ENCODE measurements at regions of chr14 and their contacts with region 1.

Region 1: GRCh38 chr14:99320105-99320572 is 48.1 kb upstream of the BCL11B start:
- DNase-seq: peak; percentile 79
- ATAC-seq: peak; percentile 88
- H3K4me3 Mint-ChIP-seq: no peak overlapping the region
- H3K27ac Mint-ChIP-seq: no peak overlapping the region
- H3K4me1 Mint-ChIP-seq: peaks cover 2% of the 10 kb centered on the region
- H3K27me3 Mint-ChIP-seq: no peaks in the 10 kb centered on the region

Region 2: DNA sequence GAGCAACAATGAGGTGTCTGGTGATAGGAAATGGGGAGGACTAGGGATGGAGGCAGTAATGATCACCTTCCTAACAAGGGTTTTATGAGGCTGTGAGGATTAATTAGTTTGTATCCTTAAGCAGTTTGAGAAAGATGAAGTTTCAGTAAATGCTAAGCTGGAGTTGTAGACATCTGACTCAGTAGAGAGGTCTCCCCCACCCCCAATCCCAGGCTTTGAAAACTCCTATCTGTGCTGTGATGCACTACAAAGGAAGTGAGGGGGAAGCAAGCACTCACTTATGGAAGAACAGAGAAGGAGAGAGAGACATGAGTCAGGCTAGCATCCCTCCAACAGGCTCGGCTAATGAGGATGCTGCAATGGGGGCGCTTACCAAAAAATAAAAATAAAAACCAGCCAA is 42.6 kb before region 1 on chr14:
- CTCF ChIA-PET with region 1: interaction called, 16 read pairs
- POLR2A ChIA-PET with region 1: no interaction called
- DNase-seq: no peak
- ATAC-seq: no peak
- H3K4me3 Mint-ChIP-seq: no peak overlapping the region
- H3K27ac Mint-ChIP-seq: no peak overlapping the region
- H3K4me1 Mint-ChIP-seq: peaks cover 49% of the 10 kb centered on the region
- H3K27me3 Mint-ChIP-seq: peaks cover 28% of the 10 kb centered on the region

Region 3: GRCh38 chr14:99304209-99304608 is 15.9 kb before region 1 on chr14:
- CTCF ChIA-PET with region 1: interaction called, 13 read pairs
- POLR2A ChIA-PET with region 1: no interaction called
- DNase-seq: no peak
- ATAC-seq: no peak
- H3K4me3 Mint-ChIP-seq: no peak overlapping the region
- H3K27ac Mint-ChIP-seq: no peak overlapping the region
- H3K4me1 Mint-ChIP-seq: no peaks in the 10 kb centered on the region
- H3K27me3 Mint-ChIP-seq: peaks cover 17% of the 10 kb centered on the region

Region 4: GRCh38 chr14:99333841-99334635 is 13.9 kb after region 1 on chr14:
- CTCF ChIA-PET with region 1: interaction called, 12 read pairs
- POLR2A ChIA-PET with region 1: no interaction called
- DNase-seq: no peak
- ATAC-seq: no peak
- H3K4me3 Mint-ChIP-seq: no peak overlapping the region
- H3K27ac Mint-ChIP-seq: no peak overlapping the region
- H3K4me1 Mint-ChIP-seq: no peaks in the 10 kb centered on the region
- H3K27me3 Mint-ChIP-seq: peaks cover 7% of the 10 kb centered on the region

Region 5: DNA sequence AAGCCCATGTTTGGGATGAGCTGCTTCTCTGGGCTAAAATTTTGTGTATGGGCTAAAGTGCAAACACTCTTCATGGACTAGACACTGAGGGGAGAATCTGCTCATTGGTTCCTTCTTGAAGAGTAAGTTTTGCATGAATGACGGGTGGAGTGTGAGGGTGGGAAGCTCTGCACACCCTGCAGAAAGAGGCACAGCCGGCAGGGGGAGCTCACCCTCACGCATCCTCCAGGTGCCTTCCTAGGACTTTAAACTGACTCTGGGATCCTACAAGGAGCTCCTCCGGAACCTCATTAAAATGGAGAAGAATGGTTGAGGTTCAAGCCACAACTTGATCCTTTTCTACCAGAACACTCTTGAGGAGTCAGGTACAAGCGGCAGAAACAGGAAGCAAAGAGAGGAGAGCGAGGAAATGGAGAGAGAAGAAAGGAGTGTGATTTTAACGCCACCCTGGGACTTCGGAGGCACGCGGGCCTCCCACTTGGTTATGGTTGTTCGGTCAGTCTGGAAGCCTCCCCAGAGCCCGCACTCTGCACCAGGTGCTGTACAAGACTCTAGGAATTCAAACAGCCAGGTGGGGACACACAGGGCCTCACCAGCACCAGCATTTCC is 73.0 kb after region 1 on chr14:
- CTCF ChIA-PET with region 1: interaction called, 14 read pairs
- POLR2A ChIA-PET with region 1: no interaction called
- DNase-seq: peak; percentile 45
- ATAC-seq: peak; percentile 56
- H3K4me3 Mint-ChIP-seq: no peak overlapping the region
- H3K27ac Mint-ChIP-seq: no peak overlapping the region
- H3K4me1 Mint-ChIP-seq: peaks cover 11% of the 10 kb centered on the region
- H3K27me3 Mint-ChIP-seq: no peaks in the 10 kb centered on the region

Region 6: DNA sequence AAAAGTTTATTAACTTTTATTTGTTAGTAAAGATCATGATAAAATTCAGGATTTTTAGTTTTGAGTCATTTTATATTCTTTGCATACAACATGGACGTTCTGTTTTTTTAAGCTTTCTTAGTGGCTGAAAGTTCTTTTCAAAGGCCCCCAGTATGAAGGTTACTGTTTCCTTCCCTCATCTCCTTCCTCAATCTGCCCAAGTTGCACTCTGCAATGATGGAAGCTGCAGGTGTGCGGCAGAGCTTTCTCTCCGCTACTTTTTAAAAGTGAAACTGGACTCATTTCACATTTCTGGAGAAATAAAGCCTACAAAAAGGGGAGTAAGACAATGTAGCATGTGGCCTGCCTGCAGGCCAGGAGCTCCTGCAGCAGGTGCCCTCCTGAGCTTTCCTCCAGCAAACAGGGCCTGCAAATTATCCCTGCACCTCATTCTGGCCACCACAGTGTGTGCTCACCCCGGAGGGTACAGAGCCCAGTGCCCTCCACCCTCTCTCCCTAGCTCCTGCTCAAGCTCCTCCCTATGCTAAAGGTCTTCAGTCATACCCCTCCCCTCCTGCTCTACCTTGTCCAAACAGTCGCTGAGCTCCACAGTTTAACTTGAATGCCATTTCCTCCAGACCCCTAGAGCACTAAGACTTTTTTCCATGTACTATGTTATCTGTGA is 81.6 kb after region 1 on chr14:
- CTCF ChIA-PET with region 1: interaction called, 12 read pairs
- POLR2A ChIA-PET with region 1: no interaction called
- DNase-seq: no peak
- ATAC-seq: no peak
- H3K4me3 Mint-ChIP-seq: no peak overlapping the region
- H3K27ac Mint-ChIP-seq: peak overlapping the region; percentile 6
- H3K4me1 Mint-ChIP-seq: peaks cover 9% of the 10 kb centered on the region
- H3K27me3 Mint-ChIP-seq: no peaks in the 10 kb centered on the region

Region 7: DNA sequence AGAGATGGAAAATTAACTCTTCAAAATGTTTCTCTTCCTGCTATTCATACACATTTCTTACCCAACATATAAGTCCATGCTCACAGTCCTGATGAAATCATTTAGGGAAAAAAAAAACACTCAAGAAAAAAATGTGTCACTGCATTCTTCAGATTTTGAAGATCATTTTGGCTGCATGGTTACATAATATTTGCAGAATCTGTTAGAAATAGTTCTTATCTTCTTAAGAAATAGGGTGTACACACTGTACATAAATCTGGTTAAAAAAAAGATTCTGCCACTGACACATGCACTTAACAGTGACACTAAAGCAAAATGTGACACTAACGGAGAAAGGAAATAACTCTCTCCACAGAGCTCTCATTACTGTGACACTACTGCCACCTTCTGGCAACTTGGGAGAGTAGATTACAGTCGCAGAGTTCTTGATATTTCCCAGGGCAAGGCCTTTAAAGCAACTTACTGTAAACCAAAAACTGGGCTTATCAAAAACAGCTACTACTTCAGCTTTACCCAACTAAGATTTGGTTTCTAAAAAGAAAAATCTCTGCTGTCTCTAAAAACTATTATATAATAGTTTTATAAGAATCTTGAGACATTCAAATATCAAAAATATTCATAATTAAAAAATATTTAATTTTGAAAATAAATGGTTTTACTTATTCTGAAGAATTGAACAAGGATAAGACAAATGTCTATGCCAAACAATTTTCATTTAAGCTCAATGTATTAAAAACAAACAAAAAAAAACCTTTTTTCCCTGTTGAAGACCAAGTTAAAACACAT is 95.5 kb after region 1 on chr14:
- CTCF ChIA-PET with region 1: interaction called, 34 read pairs
- POLR2A ChIA-PET with region 1: no interaction called
- DNase-seq: peak; percentile 80
- ATAC-seq: peak; percentile 99
- H3K4me3 Mint-ChIP-seq: no peak overlapping the region
- H3K27ac Mint-ChIP-seq: no peak overlapping the region
- H3K4me1 Mint-ChIP-seq: peaks cover 18% of the 10 kb centered on the region
- H3K27me3 Mint-ChIP-seq: no peaks in the 10 kb centered on the region

Region 8: DNA sequence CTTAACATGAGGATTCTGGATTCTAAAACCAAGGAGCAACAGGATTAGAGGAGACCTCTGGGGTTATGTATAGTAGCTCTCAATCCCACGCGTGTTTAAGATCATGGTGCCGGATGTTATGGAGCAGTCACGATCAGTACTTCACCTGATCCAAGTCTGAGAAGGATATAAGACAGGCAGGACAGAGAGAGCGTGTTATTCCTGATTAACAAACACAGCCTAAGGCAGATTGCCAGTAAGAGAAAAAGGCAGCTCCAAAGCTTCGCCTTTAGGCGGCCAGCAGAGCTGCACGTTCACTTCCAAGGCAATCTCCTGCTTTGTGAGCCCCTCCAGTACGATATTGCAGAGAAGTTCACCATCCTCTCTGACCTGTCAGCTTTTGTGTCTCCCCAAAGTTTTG is 155.0 kb after region 1 on chr14:
- CTCF ChIA-PET with region 1: no interaction called
- POLR2A ChIA-PET with region 1: no interaction called
- DNase-seq: no peak
- ATAC-seq: no peak
- H3K4me3 Mint-ChIP-seq: no peak overlapping the region
- H3K27ac Mint-ChIP-seq: no peak overlapping the region
- H3K4me1 Mint-ChIP-seq: peaks cover 19% of the 10 kb centered on the region
- H3K27me3 Mint-ChIP-seq: no peaks in the 10 kb centered on the region

Region 9: GRCh38 chr14:99511421-99512109 is 191.4 kb after region 1 on chr14:
- CTCF ChIA-PET with region 1: no interaction called
- POLR2A ChIA-PET with region 1: no interaction called
- DNase-seq: no peak
- ATAC-seq: no peak
- H3K4me3 Mint-ChIP-seq: no peak overlapping the region
- H3K27ac Mint-ChIP-seq: no peak overlapping the region
- H3K4me1 Mint-ChIP-seq: no peaks in the 10 kb centered on the region
- H3K27me3 Mint-ChIP-seq: no peaks in the 10 kb centered on the region

Measured in activated CD8-positive, alpha-beta T cell treated with anti-CD3 and anti-CD28 coated beads, Interleukin-2, amount 10 ng/mL, durations not matched to agents 7 days and 5 days (primary cell).